ENCODE measurements at regions of chr12 and their contacts with region 1.

Region 1: GRCh38 chr12:121793838-121794533 is 498 bp upstream of the RHOF start:
- DNase-seq: peak; percentile 80 to 88
- ATAC-seq: peak; percentile 47 to 58
- H3K4me3 ChIP-seq: peak overlapping the region; percentile 56 to 73 (median 59)
- H3K27ac ChIP-seq: peak overlapping the region; percentile 97 to 100 (median 99)
- H3K4me1 ChIP-seq: peaks cover 55 to 56% of the 10 kb centered on the region in 2 donors
- H3K27me3 ChIP-seq: no peaks in the 10 kb centered on the region
- CTCF ChIP-seq: peak; percentile 99 to 100 (median 100)
- POLR2A ChIP-seq: no peak

Region 2: DNA sequence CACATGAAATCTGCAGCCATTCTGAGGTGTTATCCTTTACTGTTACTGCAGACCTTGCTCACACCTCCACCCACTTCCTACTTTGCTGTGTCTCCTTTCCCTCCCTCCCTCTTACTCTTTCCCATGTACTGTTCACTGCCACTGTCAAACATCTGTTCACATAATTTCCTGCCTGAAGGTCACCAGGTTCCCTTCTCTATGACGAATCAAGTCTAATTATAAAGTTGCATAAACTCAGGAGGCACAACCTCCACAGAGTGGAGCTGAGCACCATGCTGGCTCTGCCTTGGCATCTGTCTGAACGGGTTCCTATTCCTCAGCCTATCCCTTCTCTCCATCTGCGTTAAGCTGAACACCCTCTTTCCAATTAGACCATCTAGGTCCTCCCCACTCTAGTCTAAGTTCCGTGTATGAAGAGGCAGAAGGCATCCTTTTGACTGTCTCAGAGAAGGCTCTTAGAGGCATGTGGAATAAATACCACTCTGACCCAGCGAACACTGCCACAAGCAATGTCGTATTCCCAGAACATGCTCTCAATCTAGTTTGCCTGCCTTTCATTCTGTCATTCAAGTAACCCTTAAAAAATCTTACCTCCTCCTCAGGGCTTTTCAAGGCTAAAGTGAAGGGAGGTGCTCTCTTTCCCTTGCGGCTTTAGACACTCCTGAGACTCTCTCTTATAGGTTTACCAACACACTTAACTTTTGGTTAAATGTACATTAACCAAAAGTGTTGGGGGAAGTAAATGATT is 1019.6 kb before region 1 on chr12:
- in situ Hi-C with region 1: no loop called
- intact Hi-C with region 1: no loop called
- DNase-seq: no peak
- ATAC-seq: peak; percentile 88 to 89
- H3K4me3 ChIP-seq: no peak overlapping the region
- H3K27ac ChIP-seq: peak overlapping the region; percentile 47 to 64 (median 56)
- H3K4me1 ChIP-seq: peaks cover 8 to 25% of the 10 kb centered on the region in 2 donors
- H3K27me3 ChIP-seq: no peaks in the 10 kb centered on the region
- CTCF ChIP-seq: no peak
- POLR2A ChIP-seq: no peak

Region 3: DNA sequence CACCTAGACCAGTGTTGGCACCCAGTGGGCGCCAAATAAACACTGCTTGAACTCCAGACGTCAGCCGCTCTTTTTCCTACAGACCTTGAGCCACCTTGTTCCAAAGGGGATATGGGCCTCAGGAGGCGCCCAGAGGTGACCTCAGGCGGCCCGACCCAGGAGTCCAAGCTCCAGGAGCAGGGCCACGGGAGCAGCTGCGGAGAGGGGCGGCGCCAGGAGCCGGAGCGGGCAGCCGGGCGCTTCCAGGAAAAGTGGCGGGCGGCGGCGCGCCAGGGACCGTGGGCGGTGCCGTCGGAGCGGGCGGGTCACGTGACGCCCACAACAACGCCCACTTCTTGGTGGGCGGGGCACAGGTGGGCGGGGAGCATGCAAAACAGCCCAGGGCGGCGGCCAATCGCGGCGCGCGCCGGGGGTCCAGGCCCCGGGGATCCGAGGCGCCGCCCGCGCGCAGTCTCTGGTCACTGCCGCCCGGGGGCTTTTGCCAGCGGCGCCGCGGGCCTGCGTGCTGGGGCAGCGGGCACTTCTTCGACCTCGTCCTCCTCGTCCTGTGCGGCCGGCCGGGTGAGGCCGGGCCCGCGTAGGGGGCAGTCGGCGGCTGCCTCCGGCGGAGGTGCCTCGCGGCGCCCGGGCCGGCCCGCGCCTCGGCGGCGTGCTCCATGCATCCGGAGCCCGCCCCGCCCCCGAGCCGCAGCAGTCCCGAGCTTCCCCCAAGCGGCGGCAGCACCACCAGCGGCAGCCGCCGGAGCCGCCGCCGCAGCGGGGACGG is 167.7 kb before region 1 on chr12 and contains the start of gene ORAI1:
- in situ Hi-C with region 1: no loop called
- intact Hi-C with region 1: loop called (anchors 5 kb)
- DNase-seq: peak; percentile 94 to 96
- ATAC-seq: peak; percentile 83 to 85
- H3K4me3 ChIP-seq: peak within 1 kb of the TSS; percentile 72 to 86 (median 80)
- H3K27ac ChIP-seq: peak within 1 kb of the TSS; percentile 93 to 96 (median 96)
- H3K4me1 ChIP-seq: peaks cover 41 to 52% of the 10 kb centered on the region in 2 donors
- H3K27me3 ChIP-seq: no peaks in the 10 kb centered on the region
- CTCF ChIP-seq: peak in 4 of 5 experiments; percentile 34 to 49 (median 43)
- POLR2A ChIP-seq: peak; percentile 97
- total RNA-seq, gene ORAI1: 9.9 to 29.0 (median 16.4) TPM

Region 4: GRCh38 chr12:121712461-121713256 is 81.3 kb before region 1 on chr12 and contains the start of gene TMEM120B:
- in situ Hi-C with region 1: no loop called
- intact Hi-C with region 1: loop called (anchors 2 kb)
- DNase-seq: peak; percentile 73 to 85
- ATAC-seq: peak; percentile 67 to 78
- H3K4me3 ChIP-seq: peak within 1 kb of the TSS; percentile 87 to 91 (median 90)
- H3K27ac ChIP-seq: peak within 1 kb of the TSS; percentile 93 to 100 (median 99)
- H3K4me1 ChIP-seq: peaks cover 38 to 48% of the 10 kb centered on the region in 2 donors
- H3K27me3 ChIP-seq: no peaks in the 10 kb centered on the region
- CTCF ChIP-seq: peak in 1 of 5 experiments; percentile 26
- POLR2A ChIP-seq: peak; percentile 98 to 99
- total RNA-seq, gene TMEM120B: 5.9 to 11.2 (median 6.4) TPM

Region 5: GRCh38 chr12:121804417-121805178 is 10.6 kb after region 1 on chr12:
- in situ Hi-C with region 1: no loop called
- intact Hi-C with region 1: loop called (anchors 1 kb)
- DNase-seq: peak in 1 of 2 donors; percentile 35
- ATAC-seq: no peak
- H3K4me3 ChIP-seq: peak overlapping the region; percentile 70 to 86 (median 78)
- H3K27ac ChIP-seq: peak overlapping the region; percentile 97 to 100 (median 99)
- H3K4me1 ChIP-seq: peaks cover 27 to 28% of the 10 kb centered on the region in 2 donors
- H3K27me3 ChIP-seq: no peaks in the 10 kb centered on the region
- CTCF ChIP-seq: no peak
- POLR2A ChIP-seq: no peak

Region 6: DNA sequence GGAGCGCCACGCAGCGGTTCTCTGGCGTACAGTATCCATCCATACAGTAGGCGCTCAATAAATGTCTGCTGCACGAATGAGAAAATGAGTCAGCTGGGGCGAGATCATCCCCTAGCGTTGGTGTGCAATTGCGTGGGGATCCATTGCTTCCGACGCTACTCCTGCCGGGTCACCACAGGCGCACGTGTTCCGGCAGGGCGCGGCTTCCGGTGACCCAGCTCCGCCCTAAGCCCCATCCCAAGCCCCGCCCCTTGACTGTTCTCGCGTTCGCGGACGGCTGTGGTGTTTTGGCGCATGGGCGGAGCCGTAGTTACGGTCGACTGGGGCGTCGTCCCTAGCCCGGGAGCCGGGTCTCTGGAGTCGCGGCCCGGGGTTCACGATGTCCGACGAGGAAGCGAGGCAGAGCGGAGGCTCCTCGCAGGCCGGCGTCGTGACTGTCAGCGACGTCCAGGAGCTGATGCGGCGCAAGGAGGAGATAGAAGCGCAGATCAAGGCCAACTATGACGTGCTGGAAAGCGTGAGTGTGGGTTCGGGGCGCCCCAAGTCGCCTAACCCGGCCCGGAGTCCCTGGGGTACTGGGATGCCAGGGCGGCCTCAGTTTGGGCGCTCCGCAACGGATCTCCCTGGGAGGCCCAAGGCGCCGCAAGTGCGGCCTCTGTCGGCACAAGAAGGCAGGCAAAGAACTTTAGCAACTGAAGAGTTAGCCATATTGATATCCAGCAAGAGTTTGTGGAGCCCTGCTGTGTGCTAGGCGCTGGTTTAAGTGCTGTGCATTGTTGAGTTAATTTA is 94.7 kb after region 1 on chr12 and contains the start of gene PSMD9:
- in situ Hi-C with region 1: loop called in 3 of 4 experiments (anchors 10 kb)
- intact Hi-C with region 1: loop called (anchors 1 kb)
- DNase-seq: peak; percentile 96
- ATAC-seq: peak; percentile 94 to 97
- H3K4me3 ChIP-seq: peak within 1 kb of the TSS; percentile 84 to 99 (median 92)
- H3K27ac ChIP-seq: peak within 1 kb of the TSS; percentile 94 to 99 (median 96)
- H3K4me1 ChIP-seq: peaks cover 19 to 24% of the 10 kb centered on the region in 2 donors
- H3K27me3 ChIP-seq: no peaks in the 10 kb centered on the region
- CTCF ChIP-seq: peak; percentile 61 to 77 (median 70)
- POLR2A ChIP-seq: peak; percentile 67 to 75
- total RNA-seq, gene PSMD9: 16.5 to 84.9 (median 47.0) TPM

Measured in gastrocnemius medialis (tissue), 4 donors.